ENCODE measurements at regions of chr1 and their contacts with region 1.

Region 1: DNA sequence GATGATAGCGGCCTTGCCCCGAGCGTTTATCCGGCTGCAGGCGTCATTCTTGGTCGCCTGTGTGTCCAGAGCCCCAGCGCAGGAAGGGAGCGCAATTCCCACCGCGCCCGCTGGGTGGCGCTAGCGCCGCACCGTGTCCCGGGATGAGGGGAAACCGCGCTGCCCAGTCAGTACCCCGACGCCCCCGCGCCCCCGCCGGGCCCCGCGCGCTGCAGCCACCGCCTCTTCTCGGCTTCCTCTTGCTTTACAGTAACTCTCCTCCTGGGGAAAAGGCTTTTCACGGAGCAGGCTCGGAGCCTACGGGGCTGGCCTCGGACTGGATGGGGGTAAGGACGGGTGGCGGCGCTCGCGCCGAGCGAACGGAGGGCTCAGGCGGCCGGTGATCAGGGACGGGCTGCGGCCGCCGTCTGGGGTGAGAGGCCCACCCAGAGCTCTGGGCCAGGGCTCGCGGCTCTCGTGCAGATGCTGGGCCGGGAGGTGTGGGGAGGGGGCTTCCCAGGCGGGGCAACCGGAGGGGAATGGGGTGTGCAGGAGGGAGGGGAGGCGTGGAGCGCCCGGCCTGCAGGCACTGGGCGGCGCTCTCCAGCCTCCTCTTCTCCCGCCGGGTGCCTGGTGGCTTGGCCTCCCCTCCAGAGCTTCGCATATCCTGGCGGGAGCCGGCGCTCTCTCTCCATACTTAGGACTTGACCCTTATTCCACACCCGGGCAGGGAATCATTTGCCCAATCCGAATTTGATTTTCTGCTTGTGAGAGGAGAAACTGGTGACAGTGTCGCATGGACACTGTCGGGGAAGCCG is 29.8 kb downstream of the TEX35 start:
- DNase-seq: peak; percentile 67
- ATAC-seq: peak; percentile 76
- H3K4me3 ChIP-seq: peak overlapping the region; percentile 72 to 91 (median 87)
- H3K27ac ChIP-seq: peak overlapping the region; percentile 92
- H3K4me1 ChIP-seq: peaks cover 52% of the 10 kb centered on the region
- H3K27me3 ChIP-seq: no peaks in the 10 kb centered on the region; a peak in 1 of 5 replicates
- CTCF ChIP-seq: peak; percentile 83
- EP300 ChIP-seq: peak in 1 of 2 experiments; percentile 5; a peak in 1 of 4 replicates
- POLR2A ChIP-seq: no peak; a peak in 1 of 4 replicates
- RAD21 ChIP-seq: peak; percentile 94

Region 2: DNA sequence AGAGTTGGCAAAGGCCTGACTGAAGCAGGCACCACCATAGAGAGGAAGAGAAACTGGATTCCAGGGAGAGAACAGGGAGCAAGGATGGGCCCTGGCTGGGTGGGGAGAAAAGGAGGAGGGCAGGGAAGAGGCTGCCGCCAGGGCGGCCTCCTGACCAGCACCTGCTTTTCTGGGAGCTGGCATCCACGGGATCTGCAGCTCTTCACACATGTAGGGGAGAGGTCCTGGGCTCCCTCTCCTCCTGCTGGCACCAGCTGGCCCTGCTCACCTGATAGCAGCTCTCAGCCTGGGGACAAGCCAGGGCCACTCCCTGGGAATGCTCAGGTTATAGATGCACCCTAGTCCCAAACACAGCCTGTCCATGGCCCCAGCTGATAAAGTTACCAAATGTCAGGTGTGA is 10.1 kb after region 1 on chr1:
- CTCF ChIA-PET with region 1: interaction called, 3 read pairs
- POLR2A ChIA-PET with region 1: interaction called, 10 read pairs
- in situ Hi-C with region 1: no loop called
- intact Hi-C with region 1: no loop called
- DNase-seq: no peak
- ATAC-seq: peak; percentile 20; the same call in 2 of the 3 replicates
- H3K4me3 ChIP-seq: no peak overlapping the region
- H3K27ac ChIP-seq: peak overlapping the region; percentile 78
- H3K4me1 ChIP-seq: peaks cover 35% of the 10 kb centered on the region
- H3K27me3 ChIP-seq: no peaks in the 10 kb centered on the region; a peak in 1 of 5 replicates
- CTCF ChIP-seq: no peak
- EP300 ChIP-seq: no peak
- POLR2A ChIP-seq: no peak
- RAD21 ChIP-seq: no peak

Region 3: DNA sequence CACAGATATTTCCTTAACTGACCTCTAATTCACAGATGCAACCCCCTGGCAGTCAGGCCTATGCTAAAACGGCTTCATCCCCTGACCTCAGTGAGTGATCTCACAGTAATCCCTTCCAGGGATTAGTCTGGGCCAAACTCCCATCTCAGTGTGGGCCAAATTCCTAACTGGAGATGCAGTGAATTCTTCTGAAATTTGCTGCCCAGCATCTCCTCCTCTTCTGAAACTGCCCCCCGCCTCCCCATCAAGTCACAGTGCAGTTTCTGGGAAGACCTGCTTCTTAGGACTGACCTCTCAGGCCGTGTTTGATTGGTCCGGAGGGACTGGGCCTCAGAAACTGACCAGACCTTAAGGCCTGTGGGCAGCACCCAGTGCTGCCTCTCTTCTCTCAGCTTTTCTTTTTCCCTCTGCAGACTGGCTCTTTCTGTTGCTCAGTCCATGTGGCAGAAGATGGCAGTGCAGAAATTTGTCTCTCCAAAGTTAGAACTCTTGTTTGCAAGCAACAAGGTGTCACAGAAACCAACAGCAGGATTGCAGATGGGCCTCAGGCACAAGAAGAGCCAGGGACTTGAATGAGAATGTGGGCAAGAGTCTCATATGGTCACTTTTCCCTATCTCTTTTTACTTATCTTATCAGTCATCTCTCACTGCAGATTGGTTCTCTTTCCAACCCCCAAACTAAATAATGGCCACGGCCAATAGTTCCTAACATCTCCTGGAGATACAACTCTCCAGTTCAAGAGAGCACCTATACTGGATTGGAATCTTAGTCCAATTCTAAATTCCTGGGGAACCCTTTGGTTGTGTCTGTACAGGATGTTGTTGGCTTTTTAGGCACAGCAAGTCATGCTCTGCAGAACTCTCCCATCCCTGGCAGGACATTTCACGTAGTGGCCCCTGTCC is 86.7 kb after region 1 on chr1:
- CTCF ChIA-PET with region 1: no interaction called
- POLR2A ChIA-PET with region 1: no interaction called
- in situ Hi-C with region 1: no loop called
- intact Hi-C with region 1: loop called (anchors 10 kb)
- DNase-seq: no peak
- ATAC-seq: peak; percentile 59
- H3K4me3 ChIP-seq: no peak overlapping the region
- H3K27ac ChIP-seq: no peak overlapping the region
- H3K4me1 ChIP-seq: peaks cover 46% of the 10 kb centered on the region
- H3K27me3 ChIP-seq: no peaks in the 10 kb centered on the region
- CTCF ChIP-seq: no peak
- EP300 ChIP-seq: no peak
- POLR2A ChIP-seq: no peak
- RAD21 ChIP-seq: no peak

Region 4: GRCh38 chr1:178693366-178693765 is 150.6 kb after region 1 on chr1:
- CTCF ChIA-PET with region 1: interaction called, 10 read pairs
- POLR2A ChIA-PET with region 1: interaction called, 3 read pairs
- in situ Hi-C with region 1: no loop called
- intact Hi-C with region 1: loop called (anchors 10 kb)
- DNase-seq: peak; percentile 25
- ATAC-seq: peak; percentile 91
- H3K4me3 ChIP-seq: no peak overlapping the region
- H3K27ac ChIP-seq: no peak overlapping the region
- H3K4me1 ChIP-seq: no peaks in the 10 kb centered on the region
- H3K27me3 ChIP-seq: peaks cover 0 to 3% of the 10 kb centered on the region in 2 experiments; a peak in 2 of 5 replicates
- CTCF ChIP-seq: peak; percentile 38
- EP300 ChIP-seq: no peak
- POLR2A ChIP-seq: no peak
- RAD21 ChIP-seq: no peak

Region 5: GRCh38 chr1:178704833-178705232 is 162.1 kb after region 1 on chr1:
- CTCF ChIA-PET with region 1: no interaction called
- POLR2A ChIA-PET with region 1: no interaction called
- in situ Hi-C with region 1: no loop called
- intact Hi-C with region 1: no loop called
- DNase-seq: no peak
- ATAC-seq: no peak
- H3K4me3 ChIP-seq: no peak overlapping the region
- H3K27ac ChIP-seq: no peak overlapping the region
- H3K4me1 ChIP-seq: 0 out of 2 replicates have a peak, but pooled peaks cover 7% of the 10 kb centered on the region
- H3K27me3 ChIP-seq: no peaks in the 10 kb centered on the region; a peak in 1 of 5 replicates
- CTCF ChIP-seq: no peak
- EP300 ChIP-seq: no peak
- POLR2A ChIP-seq: no peak
- RAD21 ChIP-seq: no peak

Region 6: DNA sequence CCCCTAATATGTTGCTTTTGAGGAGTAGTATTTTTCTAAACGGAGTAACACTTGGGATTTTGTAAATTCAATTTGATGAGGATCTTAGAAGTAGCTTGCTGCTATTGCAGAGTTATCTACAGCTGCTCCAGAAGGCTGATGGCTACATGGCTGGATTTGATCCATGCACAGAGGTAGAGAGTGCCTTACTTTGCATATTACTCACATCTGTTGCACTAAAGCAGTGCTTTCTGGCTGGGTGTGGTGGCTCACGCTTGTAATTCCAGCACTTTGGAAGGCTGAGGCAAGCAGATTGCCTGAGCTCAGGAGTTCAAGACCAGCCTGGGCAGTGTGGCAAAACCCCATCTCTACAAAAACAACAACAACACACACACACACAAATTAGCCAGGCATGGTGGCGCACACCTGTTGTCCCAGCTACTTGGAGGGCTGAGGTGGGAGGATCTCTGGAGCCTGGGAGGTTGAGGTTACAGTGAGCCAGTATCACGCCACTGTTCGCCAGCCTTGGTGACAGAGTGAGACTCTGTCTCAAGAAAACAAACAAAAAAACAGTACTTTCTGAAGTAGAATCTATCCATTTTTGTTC is 206.9 kb after region 1 on chr1:
- CTCF ChIA-PET with region 1: interaction called, 28 read pairs
- POLR2A ChIA-PET with region 1: interaction called, 12 read pairs
- in situ Hi-C with region 1: no loop called
- intact Hi-C with region 1: loop called (anchors 1 kb)
- DNase-seq: no peak
- ATAC-seq: no peak
- H3K4me3 ChIP-seq: no peak overlapping the region
- H3K27ac ChIP-seq: no peak overlapping the region
- H3K4me1 ChIP-seq: peaks cover 31% of the 10 kb centered on the region
- H3K27me3 ChIP-seq: no peaks in the 10 kb centered on the region
- CTCF ChIP-seq: no peak
- EP300 ChIP-seq: no peak
- POLR2A ChIP-seq: no peak
- RAD21 ChIP-seq: no peak

Region 7: DNA sequence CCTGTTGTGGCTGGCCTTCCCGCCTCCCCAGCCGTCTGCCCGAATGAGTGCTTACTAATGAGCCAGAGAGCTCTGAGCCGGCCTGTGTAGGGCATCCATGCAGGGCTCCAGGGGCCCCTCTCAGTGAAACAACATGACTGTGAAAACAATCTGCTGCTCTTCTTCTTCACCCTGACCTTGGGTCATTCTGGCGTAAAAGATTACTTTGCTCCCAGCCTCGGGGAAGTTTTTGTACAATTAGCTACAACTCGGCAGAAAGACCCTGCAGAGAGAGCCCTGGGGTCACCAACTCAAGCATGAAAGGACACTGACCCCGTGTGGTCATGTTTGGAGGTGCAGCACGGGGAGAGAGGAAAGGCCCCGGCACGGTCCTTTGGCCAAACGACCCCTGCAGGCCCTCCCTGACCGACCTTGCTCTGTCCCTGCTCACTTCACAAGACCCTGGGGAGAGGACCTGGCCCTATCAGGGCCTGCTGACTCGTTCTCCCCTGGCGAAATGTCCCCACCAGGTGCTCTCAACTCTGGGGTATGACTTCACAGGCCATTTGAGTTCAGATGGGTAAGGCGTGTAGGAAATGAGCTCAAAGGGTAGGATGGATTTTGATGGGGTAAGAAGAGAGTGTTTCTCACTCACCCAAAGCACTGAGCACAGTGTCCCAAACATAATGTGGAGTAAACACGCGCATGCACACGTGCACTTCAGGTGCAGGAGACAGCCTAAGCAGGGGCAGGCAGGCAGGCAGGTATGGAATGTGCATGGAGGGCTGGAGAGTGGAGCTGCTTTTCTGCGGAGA is 460.0 kb after region 1 on chr1:
- CTCF ChIA-PET with region 1: interaction called, 8 read pairs
- POLR2A ChIA-PET with region 1: interaction called, 16 read pairs
- in situ Hi-C with region 1: no loop called
- intact Hi-C with region 1: no loop called
- DNase-seq: peak; percentile 79
- ATAC-seq: peak; percentile 92
- H3K4me3 ChIP-seq: peak overlapping the region; percentile 38 to 71 (median 57); a peak in 5 of 6 replicates
- H3K27ac ChIP-seq: no peak overlapping the region
- H3K4me1 ChIP-seq: peaks cover 52% of the 10 kb centered on the region
- H3K27me3 ChIP-seq: no peaks in the 10 kb centered on the region
- CTCF ChIP-seq: peak; percentile 96
- EP300 ChIP-seq: no peak
- POLR2A ChIP-seq: no peak
- RAD21 ChIP-seq: peak; percentile 96

Measured in HepG2 (cell line).